Activated CD4-positive, alpha-beta T cell treated with anti-CD3 and anti-CD28 coated beads for 36 hours (primary cell): ENCODE measurements at regions of chr2 and their contacts with region 1.

Region 1: GRCh38 chr2:241149925-241150659 is at the start of gene PPP1R7:
- DNase-seq: peak; percentile 98
- ATAC-seq: peak; percentile 79
- H3K4me3 Mint-ChIP-seq: peak within 1 kb of the TSS; percentile 88
- H3K27ac Mint-ChIP-seq: peak within 1 kb of the TSS; percentile 91
- H3K4me1 Mint-ChIP-seq: peaks cover 51% of the 10 kb centered on the region
- H3K27me3 Mint-ChIP-seq: no peaks in the 10 kb centered on the region
- total RNA-seq, gene PPP1R7: 104 to 129 TPM

Region 2: GRCh38 chr2:240560480-240561326 is 589.4 kb before region 1 on chr2:
- CTCF ChIA-PET with region 1: no interaction called
- POLR2A ChIA-PET with region 1: no interaction called
- intact Hi-C with region 1: loop called in 1 of 2 experiments (anchors 2 kb)
- DNase-seq: peak; percentile 100
- ATAC-seq: peak; percentile 60
- H3K4me3 Mint-ChIP-seq: peak overlapping the region; percentile 82
- H3K27ac Mint-ChIP-seq: peak overlapping the region; percentile 89
- H3K4me1 Mint-ChIP-seq: peaks cover 76% of the 10 kb centered on the region
- H3K27me3 Mint-ChIP-seq: no peaks in the 10 kb centered on the region

Region 3: DNA sequence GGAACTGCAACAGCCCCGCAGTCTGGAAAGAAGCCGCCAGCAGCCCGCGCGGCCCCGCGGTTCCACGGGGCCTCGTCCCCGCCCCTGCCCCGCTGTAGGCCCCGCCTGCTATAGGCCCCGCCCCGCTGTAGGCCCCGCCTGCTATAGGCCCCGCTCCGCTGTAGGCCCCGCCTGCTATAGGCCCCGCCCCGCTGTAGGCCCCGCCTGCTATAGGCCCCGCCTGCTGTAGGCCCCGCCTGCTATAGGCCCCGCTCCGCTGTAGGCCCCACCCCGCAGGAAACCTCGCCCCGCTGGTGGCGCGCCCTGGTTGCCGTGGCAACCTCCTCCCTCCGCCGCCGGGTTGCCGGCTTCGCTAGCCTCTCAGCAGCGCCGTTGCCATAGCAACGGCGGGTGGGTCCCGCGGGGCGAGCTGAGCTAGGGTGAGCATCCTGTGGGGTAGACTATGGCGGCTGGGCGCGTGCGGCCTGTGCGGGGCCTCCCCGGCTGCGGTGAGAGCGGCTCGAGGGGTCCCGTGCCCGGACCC is 317.8 kb before region 1 on chr2:
- CTCF ChIA-PET with region 1: no interaction called
- POLR2A ChIA-PET with region 1: no interaction called
- intact Hi-C with region 1: loop called in 1 of 2 experiments (anchors 1 kb)
- DNase-seq: peak; percentile 98
- ATAC-seq: peak; percentile 96
- H3K4me3 Mint-ChIP-seq: peak overlapping the region; percentile 63
- H3K27ac Mint-ChIP-seq: no peak overlapping the region
- H3K4me1 Mint-ChIP-seq: peaks cover 2% of the 10 kb centered on the region
- H3K27me3 Mint-ChIP-seq: peaks cover 19% of the 10 kb centered on the region

Region 4: DNA sequence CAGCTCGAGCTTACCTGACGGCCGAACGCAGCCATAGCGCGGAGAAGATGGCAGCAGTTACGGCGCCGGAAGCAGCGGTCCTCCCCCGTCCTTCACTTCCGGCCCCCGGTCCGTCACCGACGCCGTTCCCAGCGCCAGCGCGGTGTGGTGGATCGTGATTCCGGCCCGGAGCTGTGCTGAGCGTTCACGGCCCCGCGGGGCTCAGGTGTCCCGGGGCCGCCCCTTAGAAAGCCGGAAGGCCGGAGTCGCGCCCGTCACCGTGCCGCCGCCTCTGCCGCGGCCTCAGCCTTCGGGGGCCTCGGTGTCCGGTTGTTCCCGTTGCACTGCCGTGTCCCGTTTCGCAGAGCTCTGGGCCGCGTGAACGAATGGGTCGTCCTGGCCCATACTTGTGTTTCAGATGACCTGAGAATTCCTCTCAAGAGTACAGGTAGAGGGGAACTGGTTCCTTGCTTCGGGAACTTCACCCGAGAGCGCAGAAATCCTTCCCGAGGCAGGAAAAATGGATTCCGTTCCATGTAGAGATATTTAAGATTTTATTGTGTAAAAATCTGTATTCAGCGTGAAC is 47.8 kb before region 1 on chr2 and contains the start of gene MTERF4:
- CTCF ChIA-PET with region 1: interaction called, 3 read pairs
- POLR2A ChIA-PET with region 1: interaction called, 7 read pairs
- intact Hi-C with region 1: loop called (anchors 1 kb)
- DNase-seq: peak; percentile 94
- ATAC-seq: peak; percentile 97
- H3K4me3 Mint-ChIP-seq: peak within 1 kb of the TSS; percentile 98
- H3K27ac Mint-ChIP-seq: peak within 1 kb of the TSS; percentile 99
- H3K4me1 Mint-ChIP-seq: peaks cover 48% of the 10 kb centered on the region
- H3K27me3 Mint-ChIP-seq: no peaks in the 10 kb centered on the region
- total RNA-seq, gene MTERF4: 34.4 to 34.5 TPM

Region 5: GRCh38 chr2:241271641-241272297 is 121.7 kb after region 1 on chr2:
- CTCF ChIA-PET with region 1: no interaction called
- POLR2A ChIA-PET with region 1: no interaction called
- intact Hi-C with region 1: loop called in 1 of 2 experiments (anchors 1 kb)
- DNase-seq: peak; percentile 72
- ATAC-seq: peak; percentile 59
- H3K4me3 Mint-ChIP-seq: peak overlapping the region; percentile 77
- H3K27ac Mint-ChIP-seq: peak overlapping the region; percentile 89
- H3K4me1 Mint-ChIP-seq: peaks cover 46% of the 10 kb centered on the region
- H3K27me3 Mint-ChIP-seq: no peaks in the 10 kb centered on the region

Region 6: DNA sequence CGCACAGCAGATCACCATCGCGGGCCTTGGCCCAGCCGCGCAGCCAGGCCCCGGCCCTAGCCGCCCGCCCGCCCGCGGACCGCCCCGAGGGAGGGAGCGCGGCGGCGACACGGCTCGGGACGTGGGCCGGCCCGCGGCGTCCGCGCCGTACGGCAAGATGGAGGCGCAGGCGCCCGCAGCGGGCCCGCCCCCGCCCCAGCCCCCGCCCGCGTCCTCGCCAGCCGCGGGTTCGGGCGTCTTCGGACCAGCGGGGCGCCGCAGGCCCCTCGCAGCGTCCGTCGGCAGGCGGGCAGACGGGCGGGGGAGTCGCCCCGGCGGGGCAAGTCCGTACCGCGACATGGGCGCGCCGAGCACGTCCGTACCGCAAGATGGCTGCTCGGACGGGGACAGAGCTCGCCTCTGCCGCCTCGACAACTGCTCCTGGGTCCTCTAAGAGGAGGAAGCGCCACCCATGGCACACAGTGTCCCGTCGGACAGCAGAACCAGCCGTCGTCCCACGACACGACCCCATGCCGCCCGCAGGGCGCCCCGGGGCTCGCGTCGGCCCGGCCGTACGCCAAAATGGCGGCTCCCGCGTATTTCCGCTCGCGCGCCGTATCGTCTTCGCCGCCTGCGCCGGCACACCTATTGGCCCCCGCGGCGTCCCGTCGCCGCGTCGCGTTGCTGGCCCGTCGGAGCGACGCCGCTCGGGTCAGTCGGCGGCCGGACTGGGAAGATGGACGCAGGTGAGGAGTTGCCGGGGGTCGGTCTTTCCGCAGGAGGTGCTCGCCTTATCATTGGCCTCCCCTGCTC is 487.1 kb after region 1 on chr2 and contains the starts of genes ATG4B and THAP4:
- CTCF ChIA-PET with region 1: interaction called, 3 read pairs
- POLR2A ChIA-PET with region 1: interaction called, 3 read pairs
- intact Hi-C with region 1: loop called in 1 of 2 experiments (anchors 1 kb)
- DNase-seq: peak; percentile 90
- ATAC-seq: peak; percentile 69
- H3K4me3 Mint-ChIP-seq: peak within 1 kb of the TSS; percentile 84
- H3K27ac Mint-ChIP-seq: peak within 1 kb of the TSS; percentile 96
- H3K4me1 Mint-ChIP-seq: peaks cover 50% of the 10 kb centered on the region
- H3K27me3 Mint-ChIP-seq: no peaks in the 10 kb centered on the region
- total RNA-seq, gene ATG4B: 71.8 to 80.1 TPM
- total RNA-seq, gene THAP4: 42.5 to 54.1 TPM

Region 7: GRCh38 chr2:241734467-241735208 is 584.5 kb after region 1 on chr2 and contains the start of gene D2HGDH:
- CTCF ChIA-PET with region 1: no interaction called
- POLR2A ChIA-PET with region 1: no interaction called
- intact Hi-C with region 1: loop called in 1 of 2 experiments (anchors 1 kb)
- DNase-seq: peak; percentile 98
- ATAC-seq: peak; percentile 92
- H3K4me3 Mint-ChIP-seq: peak within 1 kb of the TSS; percentile 79
- H3K27ac Mint-ChIP-seq: peak within 1 kb of the TSS; percentile 70
- H3K4me1 Mint-ChIP-seq: peaks cover 57% of the 10 kb centered on the region
- H3K27me3 Mint-ChIP-seq: no peaks in the 10 kb centered on the region
- total RNA-seq, gene D2HGDH: 18.2 to 34.1 TPM